HCT116 (cell line): ENCODE measurements at regions of chr12 and their contacts with region 1.

Region 1: DNA sequence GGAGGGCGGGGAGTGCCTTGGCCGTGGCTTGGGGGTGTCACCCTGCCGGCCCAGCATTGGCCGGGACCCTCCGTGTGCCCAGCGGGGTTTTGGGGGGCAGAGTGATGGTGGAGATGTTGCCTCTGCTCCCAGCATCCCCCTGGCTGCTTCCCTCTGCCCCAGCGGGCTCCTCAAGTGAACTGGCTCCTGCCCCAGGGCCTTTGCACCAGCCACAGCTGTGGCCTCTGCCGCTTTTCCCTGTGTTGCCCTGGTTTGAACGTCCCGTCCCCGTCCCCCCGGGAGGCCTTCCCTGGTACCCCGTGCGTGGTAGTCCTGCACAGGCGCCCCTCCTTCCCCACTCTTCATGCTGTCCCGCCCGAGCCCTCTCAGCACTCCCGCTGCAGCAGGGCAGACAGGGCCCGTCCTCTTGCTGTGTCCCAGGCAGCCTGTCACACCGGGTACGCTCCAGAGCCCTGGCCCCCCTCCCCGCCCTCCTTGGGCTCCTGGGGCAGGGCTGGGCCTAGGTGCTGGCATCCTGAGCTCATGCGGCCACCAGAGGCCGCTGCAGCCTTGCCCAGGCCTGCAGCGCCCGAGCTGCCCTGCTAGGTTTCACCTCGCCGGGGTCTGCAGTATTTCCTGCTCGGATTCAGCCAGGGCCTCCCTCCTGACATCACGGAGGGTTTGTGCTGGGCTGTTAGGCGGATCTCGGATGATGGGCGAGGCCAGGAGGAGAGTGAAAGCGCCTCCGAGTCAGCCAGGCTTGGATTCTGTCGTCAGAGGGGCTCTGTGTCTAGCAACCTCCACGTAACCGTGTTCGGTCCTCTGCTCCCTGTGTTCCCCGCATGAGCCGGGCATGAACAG is 9.5 kb downstream of the NOC4L start:
- DNase-seq: no peak
- ATAC-seq: peak; percentile 97
- H3K4me3 ChIP-seq: no peak overlapping the region
- H3K27ac ChIP-seq: no peak overlapping the region
- H3K4me1 ChIP-seq: no peaks in the 10 kb centered on the region
- H3K27me3 ChIP-seq: no peaks in the 10 kb centered on the region
- CTCF ChIP-seq: peak; percentile 86 to 94 (median 93)
- POLR2A ChIP-seq: no peak
- RAD21 ChIP-seq: peak; percentile 97

Region 2: GRCh38 chr12:132218915-132219314 is 65.2 kb after region 1 on chr12:
- CTCF ChIA-PET with region 1: interaction called, 33 read pairs
- POLR2A ChIA-PET with region 1: no interaction called
- RAD21 ChIA-PET with region 1: interaction called, 3 to 6 read pairs
- intact Hi-C with region 1: loop called (anchors 2 kb)
- DNase-seq: peak; percentile 52
- ATAC-seq: peak; percentile 84
- H3K4me3 ChIP-seq: peak overlapping the region; percentile 26 to 46
- H3K27ac ChIP-seq: no peak overlapping the region
- H3K4me1 ChIP-seq: peaks cover 9 to 33% of the 10 kb centered on the region in 2 experiments; a peak in 3 of 4 replicates
- H3K27me3 ChIP-seq: peaks cover 8% of the 10 kb centered on the region; the same call in 1 of the 2 replicates
- CTCF ChIP-seq: peak; percentile 63 to 68 (median 66); a peak in 5 of 6 replicates
- POLR2A ChIP-seq: no peak
- RAD21 ChIP-seq: peak; percentile 61

Region 3: DNA sequence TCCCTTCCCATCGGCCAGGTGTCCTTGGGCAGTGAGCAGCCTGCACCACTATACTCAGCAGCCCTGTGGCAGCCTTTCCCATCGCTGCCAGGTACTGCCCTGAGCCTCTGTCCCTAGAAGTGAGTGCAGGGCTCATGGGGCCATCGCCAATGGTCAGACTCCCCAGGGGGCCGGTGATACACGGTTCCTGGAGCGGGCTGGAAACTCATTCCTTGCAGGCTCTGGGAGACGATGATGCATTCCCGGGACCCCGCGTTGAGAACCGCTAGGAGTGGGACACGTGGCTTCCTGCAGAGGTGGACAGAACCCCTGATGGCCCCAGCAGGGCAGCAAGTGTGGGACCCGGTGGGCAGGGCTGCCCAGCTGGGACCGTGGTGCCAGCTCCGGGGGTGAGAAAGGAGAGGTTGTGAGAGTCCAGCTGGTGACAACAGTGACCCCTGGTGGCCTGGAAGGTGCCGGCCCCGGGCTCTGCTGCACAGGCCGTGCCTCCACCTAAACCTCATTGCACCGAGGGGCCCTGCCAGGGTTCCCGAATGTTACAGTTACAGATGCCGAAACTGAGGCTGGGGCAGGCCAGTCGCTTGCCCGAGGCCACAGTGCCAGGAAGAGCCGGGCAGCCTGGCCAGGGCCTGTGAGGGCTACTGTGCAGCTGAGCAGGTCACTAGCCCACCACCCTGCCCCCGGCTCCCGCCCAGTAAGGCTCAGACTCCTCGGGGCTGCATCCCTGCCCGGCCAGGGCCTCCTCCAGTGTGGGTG is 370.0 kb after region 1 on chr12:
- CTCF ChIA-PET with region 1: no interaction called
- POLR2A ChIA-PET with region 1: no interaction called
- RAD21 ChIA-PET with region 1: no interaction called
- intact Hi-C with region 1: loop called (anchors 5 kb)
- DNase-seq: no peak
- ATAC-seq: peak; percentile 88
- H3K4me3 ChIP-seq: no peak overlapping the region
- H3K27ac ChIP-seq: no peak overlapping the region
- H3K4me1 ChIP-seq: peaks cover 0 to 11% of the 10 kb centered on the region in 2 experiments; a peak in 1 of 4 replicates
- H3K27me3 ChIP-seq: no peaks in the 10 kb centered on the region
- CTCF ChIP-seq: peak; percentile 63 to 86 (median 81); a peak in 5 of 6 replicates
- POLR2A ChIP-seq: no peak
- RAD21 ChIP-seq: peak; percentile 69; the same call in 1 of the 2 replicates